ENCODE measurements at regions of chr15 and their contacts with region 1.

Region 1: DNA sequence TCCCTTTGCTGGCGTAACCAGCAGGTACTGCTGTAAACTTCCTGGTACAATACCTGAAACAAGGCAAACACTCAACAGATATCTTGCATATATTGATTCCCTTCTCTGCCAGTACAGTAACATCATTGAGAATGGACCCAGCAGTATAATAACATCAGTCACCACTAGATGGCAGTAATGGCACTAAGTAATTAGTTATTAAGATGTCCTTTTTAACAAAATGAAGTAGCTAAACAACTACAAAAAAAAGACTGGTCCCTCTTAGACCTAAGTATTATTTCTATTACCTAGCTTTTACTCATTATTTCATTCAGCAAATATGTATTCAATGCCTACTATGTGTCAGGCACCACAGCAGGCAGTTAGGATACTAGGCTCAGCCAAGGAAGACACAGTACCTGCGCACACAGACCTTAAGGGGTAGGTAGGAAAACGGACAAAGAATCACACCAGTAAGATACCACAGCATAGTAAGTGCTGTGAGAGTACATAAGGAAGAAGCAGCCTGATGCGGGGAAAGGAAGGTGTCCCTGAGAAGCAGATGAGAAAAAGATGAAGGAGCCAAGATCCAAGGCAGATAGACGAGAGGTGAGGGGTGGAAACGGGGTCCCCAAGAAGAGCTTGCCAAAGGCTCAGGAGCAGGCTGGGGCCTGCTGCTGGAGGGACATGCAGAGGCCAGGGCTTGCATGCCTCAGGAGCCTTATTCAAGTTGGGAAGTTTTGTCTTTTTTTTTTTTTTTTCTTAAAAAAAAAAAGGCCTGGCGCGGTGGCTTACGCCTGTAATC is 102.8 kb upstream of the CHD2 start:
- DNase-seq: peak; percentile 63 to 79 (median 75)
- H3K4me3 ChIP-seq: no peak overlapping the region
- H3K4me3 Mint-ChIP-seq: no peak overlapping the region
- H3K27ac ChIP-seq: no peak overlapping the region
- H3K27ac Mint-ChIP-seq: peak overlapping the region; percentile 43 to 92 (median 91)
- H3K4me1 ChIP-seq: peaks cover 7% of the 10 kb centered on the region
- H3K4me1 Mint-ChIP-seq: peaks cover 6 to 9% (median 7%) of the 10 kb centered on the region in 4 donors
- H3K27me3 ChIP-seq: no peaks in the 10 kb centered on the region
- H3K27me3 Mint-ChIP-seq: no peaks in the 10 kb centered on the region

Region 2: DNA sequence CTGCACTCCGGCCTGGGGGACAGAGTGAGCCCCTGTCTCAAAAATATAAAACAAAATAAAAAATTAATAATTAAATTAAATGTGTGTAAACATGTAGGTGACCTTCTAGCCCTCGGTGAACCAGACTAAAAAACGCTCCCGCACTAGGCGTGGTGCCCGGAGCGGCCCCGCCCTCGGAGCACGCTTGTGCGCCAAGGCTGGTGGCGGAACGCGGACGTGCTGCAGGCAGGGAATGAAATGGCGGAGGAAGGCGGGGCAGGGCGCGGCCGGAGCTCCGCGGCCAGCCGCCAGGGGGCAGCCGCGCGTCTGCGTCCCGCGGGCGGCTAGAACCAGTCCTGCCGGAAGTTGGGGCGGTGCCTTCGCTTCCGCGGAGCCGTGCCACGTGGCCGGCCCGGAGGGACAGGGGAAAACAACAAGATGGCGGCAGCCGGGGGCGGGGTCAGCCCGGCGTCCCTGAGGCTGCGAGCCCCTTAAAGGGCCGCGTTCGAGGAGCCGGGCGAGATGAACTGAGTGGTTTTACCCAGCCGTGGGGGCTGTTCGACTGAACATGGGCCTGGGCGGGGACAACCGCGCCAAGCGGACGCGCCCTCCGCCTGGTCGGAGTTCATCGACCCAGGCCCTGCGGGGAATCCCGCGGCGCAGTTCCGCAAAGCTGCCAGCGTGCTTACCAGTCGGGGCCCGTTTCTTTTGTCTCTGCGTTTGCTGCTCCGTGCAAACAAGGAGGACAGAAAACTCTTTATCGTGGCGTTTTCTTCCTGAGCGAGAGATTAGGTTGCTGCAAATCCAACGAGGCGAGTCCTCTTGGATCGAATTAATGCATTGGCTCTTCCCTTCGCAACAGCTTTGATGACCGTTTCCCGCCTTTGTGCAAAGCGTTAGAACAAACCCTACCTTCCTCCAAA is 11.9 kb after region 1 on chr15:
- CTCF ChIA-PET with region 1: interaction called, 66 read pairs
- POLR2A ChIA-PET with region 1: interaction called, 46 read pairs
- intact Hi-C with region 1: loop called (anchors 1 kb)
- DNase-seq: peak; percentile 98 to 100 (median 99)
- H3K4me3 ChIP-seq: peak overlapping the region; percentile 84 to 94
- H3K4me3 Mint-ChIP-seq: peak overlapping the region; percentile 79 to 97 (median 89)
- H3K27ac ChIP-seq: peak overlapping the region; percentile 91
- H3K27ac Mint-ChIP-seq: peak overlapping the region; percentile 92 to 100 (median 95)
- H3K4me1 ChIP-seq: peaks cover 58% of the 10 kb centered on the region
- H3K4me1 Mint-ChIP-seq: peaks cover 27 to 68% (median 43%) of the 10 kb centered on the region in 4 donors
- H3K27me3 ChIP-seq: no peaks in the 10 kb centered on the region
- H3K27me3 Mint-ChIP-seq: no peaks in the 10 kb centered on the region

Region 3: DNA sequence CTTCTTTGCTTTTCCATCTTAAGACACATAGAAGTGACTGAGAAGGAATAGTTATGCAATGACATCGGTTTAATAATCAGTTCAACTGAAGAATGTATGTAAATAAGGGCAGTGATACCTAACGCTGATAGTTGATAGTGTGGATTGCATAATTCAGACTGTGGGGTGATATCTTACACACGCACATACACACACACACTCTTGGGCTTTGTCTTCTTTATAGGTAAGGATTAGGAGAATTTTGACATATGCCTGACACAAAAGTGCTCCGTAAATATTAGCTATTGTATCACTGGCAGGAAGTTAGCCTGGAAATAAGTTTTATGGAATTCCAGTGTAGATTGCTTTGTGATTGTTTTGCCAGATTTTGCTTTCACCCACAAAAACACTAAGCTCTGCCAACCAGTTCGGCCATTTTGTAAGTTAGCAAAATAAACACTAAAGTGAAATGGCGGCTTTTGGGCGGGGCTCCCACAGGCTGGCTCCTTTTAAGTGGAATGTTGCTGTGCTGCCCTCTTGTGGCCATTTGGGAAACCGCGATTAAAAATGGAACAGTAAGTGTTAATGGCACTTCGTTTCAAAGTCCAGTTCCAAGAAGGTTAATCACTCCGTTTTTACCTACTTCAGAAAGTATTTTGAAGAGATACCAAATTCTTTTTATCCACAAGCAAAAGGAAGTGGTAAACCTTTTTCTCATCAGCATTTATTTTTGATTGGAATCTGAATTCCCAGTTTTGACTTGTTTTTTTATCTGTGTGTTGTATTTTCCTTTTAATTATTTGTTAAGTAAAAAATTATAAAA is 120.4 kb after region 1 on chr15:
- CTCF ChIA-PET with region 1: interaction called, 205 read pairs
- POLR2A ChIA-PET with region 1: interaction called, 27 read pairs
- intact Hi-C with region 1: loop called (anchors 1 kb)
- DNase-seq: peak; percentile 87 to 91 (median 89)
- H3K4me3 ChIP-seq: no peak overlapping the region
- H3K4me3 Mint-ChIP-seq: peak overlapping the region; percentile 54 to 79 (median 62)
- H3K27ac ChIP-seq: peak overlapping the region; percentile 82
- H3K27ac Mint-ChIP-seq: peak overlapping the region; percentile 90 to 100 (median 96)
- H3K4me1 ChIP-seq: peaks cover 97% of the 10 kb centered on the region
- H3K4me1 Mint-ChIP-seq: peaks cover 72 to 90% (median 80%) of the 10 kb centered on the region in 4 donors
- H3K27me3 ChIP-seq: no peaks in the 10 kb centered on the region
- H3K27me3 Mint-ChIP-seq: no peaks in the 10 kb centered on the region

Region 4: GRCh38 chr15:92936693-92937092 is 139.3 kb after region 1 on chr15:
- CTCF ChIA-PET with region 1: interaction called, 20 read pairs
- POLR2A ChIA-PET with region 1: no interaction called
- intact Hi-C with region 1: no loop called
- DNase-seq: no peak
- H3K4me3 ChIP-seq: no peak overlapping the region
- H3K4me3 Mint-ChIP-seq: peak overlapping the region in 1 of 8 donors; percentile 8
- H3K27ac ChIP-seq: no peak overlapping the region
- H3K27ac Mint-ChIP-seq: peak overlapping the region in 5 of 7 donors; percentile 31 to 87 (median 54)
- H3K4me1 ChIP-seq: peaks cover 24% of the 10 kb centered on the region
- H3K4me1 Mint-ChIP-seq: peaks cover 22 to 49% (median 34%) of the 10 kb centered on the region in 4 donors
- H3K27me3 ChIP-seq: no peaks in the 10 kb centered on the region
- H3K27me3 Mint-ChIP-seq: no peaks in the 10 kb centered on the region

Region 5: GRCh38 chr15:92979011-92979701 is 181.8 kb after region 1 on chr15:
- CTCF ChIA-PET with region 1: interaction called, 13 read pairs
- POLR2A ChIA-PET with region 1: no interaction called
- intact Hi-C with region 1: no loop called
- DNase-seq: no peak
- H3K4me3 ChIP-seq: no peak overlapping the region
- H3K4me3 Mint-ChIP-seq: peak overlapping the region in 1 of 8 donors; percentile 14
- H3K27ac ChIP-seq: no peak overlapping the region
- H3K27ac Mint-ChIP-seq: peak overlapping the region; percentile 18 to 89 (median 68)
- H3K4me1 ChIP-seq: peaks cover 21% of the 10 kb centered on the region
- H3K4me1 Mint-ChIP-seq: peaks cover 17 to 35% (median 23%) of the 10 kb centered on the region in 4 donors
- H3K27me3 ChIP-seq: no peaks in the 10 kb centered on the region
- H3K27me3 Mint-ChIP-seq: no peaks in the 10 kb centered on the region

Region 6: GRCh38 chr15:93018580-93018979 is 221.2 kb after region 1 on chr15:
- CTCF ChIA-PET with region 1: interaction called, 19 read pairs
- POLR2A ChIA-PET with region 1: no interaction called
- intact Hi-C with region 1: loop called (anchors 10 kb)
- DNase-seq: no peak
- H3K4me3 ChIP-seq: no peak overlapping the region
- H3K4me3 Mint-ChIP-seq: no peak overlapping the region
- H3K27ac ChIP-seq: no peak overlapping the region
- H3K27ac Mint-ChIP-seq: peak overlapping the region in 6 of 7 donors; percentile 39 to 88 (median 62)
- H3K4me1 ChIP-seq: peaks cover 24% of the 10 kb centered on the region
- H3K4me1 Mint-ChIP-seq: peaks cover 30 to 66% (median 46%) of the 10 kb centered on the region in 4 donors
- H3K27me3 ChIP-seq: no peaks in the 10 kb centered on the region
- H3K27me3 Mint-ChIP-seq: no peaks in the 10 kb centered on the region